Naive thymus-derived CD4-positive, alpha-beta T cell (primary cell): ENCODE measurements at regions of chr11 and their contacts with region 1.

Region 1: DNA sequence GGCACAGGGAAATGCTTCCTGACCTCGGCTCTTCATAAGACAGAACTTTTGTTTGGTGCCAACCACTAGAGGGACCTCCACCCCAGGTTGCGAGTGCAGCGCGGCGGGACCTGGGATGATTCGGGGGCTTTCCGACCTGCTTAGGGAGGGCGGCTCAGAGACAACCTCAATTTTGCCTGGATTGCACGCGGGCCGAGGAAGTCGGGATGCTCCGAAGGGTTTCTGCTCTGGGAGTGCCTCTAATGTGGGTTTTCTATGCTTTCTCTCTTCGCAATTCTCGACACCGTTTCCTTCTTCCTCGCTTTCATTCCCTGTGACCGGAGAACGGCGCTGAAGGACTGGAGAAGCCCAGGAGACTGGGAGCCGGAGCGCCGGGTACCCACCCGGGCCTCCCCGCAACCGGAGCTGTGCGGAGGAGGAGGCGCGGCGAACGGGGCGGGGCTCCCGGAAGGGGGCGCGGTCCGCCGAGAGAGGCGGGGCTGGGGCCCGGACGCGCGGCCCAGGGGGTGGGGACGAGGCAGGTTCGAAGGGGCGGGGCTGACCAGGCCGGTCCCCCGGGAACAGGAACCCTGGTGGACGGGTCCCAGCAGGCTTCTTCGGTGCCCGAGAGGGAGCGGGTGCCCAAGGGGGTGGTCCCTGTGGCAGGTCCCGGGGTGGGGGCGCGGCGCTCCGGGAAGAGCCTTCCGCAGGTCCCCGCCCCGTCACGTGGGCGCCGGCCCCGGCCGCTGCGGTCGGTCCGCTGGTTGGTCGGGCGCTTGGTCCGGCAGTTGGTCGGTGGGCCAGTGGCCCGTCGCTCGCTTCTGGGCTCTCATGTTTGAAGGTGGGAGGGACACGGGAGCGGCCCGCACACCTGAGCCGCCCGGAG is at the start of gene PPFIBP2:
- DNase-seq: peak; percentile 75 to 92 (median 85)
- ATAC-seq: peak; percentile 93
- H3K4me3 ChIP-seq: peak within 1 kb of the TSS; percentile 94
- H3K4me3 Mint-ChIP-seq: peak within 1 kb of the TSS; percentile 92 to 98 (median 95)
- H3K27ac ChIP-seq: peak within 1 kb of the TSS; percentile 91
- H3K27ac Mint-ChIP-seq: peak within 1 kb of the TSS in 8 of 9 donors; percentile 86 to 98 (median 96)
- H3K4me1 ChIP-seq: peaks cover 4 to 39% of the 10 kb centered on the region in 2 donors
- H3K4me1 Mint-ChIP-seq: peaks cover 11 to 65% (median 52%) of the 10 kb centered on the region in 7 donors
- H3K27me3 ChIP-seq: no peaks in the 10 kb centered on the region
- H3K27me3 Mint-ChIP-seq: peaks cover 0 to 23% (median 0%) of the 10 kb centered on the region in 5 donors
- total RNA-seq, gene PPFIBP2: 5.7 to 55.6 (median 45.9) TPM

Region 2: GRCh38 chr11:5690216-5690615 is 1823.2 kb before region 1 on chr11:
- CTCF ChIA-PET with region 1: no interaction called
- POLR2A ChIA-PET with region 1: no interaction called
- intact Hi-C with region 1: loop called in 1 of 2 experiments (anchors 5 kb)
- DNase-seq: no peak
- ATAC-seq: no peak
- H3K4me3 ChIP-seq: peak overlapping the region; percentile 81
- H3K4me3 Mint-ChIP-seq: peak overlapping the region; percentile 93 to 100 (median 98)
- H3K27ac ChIP-seq: peak overlapping the region; percentile 93
- H3K27ac Mint-ChIP-seq: peak overlapping the region; percentile 95 to 100 (median 97)
- H3K4me1 ChIP-seq: peaks cover 29 to 40% of the 10 kb centered on the region in 2 donors
- H3K4me1 Mint-ChIP-seq: peaks cover 38 to 68% (median 57%) of the 10 kb centered on the region in 7 donors
- H3K27me3 ChIP-seq: no peaks in the 10 kb centered on the region
- H3K27me3 Mint-ChIP-seq: no peaks in the 10 kb centered on the region

Region 3: DNA sequence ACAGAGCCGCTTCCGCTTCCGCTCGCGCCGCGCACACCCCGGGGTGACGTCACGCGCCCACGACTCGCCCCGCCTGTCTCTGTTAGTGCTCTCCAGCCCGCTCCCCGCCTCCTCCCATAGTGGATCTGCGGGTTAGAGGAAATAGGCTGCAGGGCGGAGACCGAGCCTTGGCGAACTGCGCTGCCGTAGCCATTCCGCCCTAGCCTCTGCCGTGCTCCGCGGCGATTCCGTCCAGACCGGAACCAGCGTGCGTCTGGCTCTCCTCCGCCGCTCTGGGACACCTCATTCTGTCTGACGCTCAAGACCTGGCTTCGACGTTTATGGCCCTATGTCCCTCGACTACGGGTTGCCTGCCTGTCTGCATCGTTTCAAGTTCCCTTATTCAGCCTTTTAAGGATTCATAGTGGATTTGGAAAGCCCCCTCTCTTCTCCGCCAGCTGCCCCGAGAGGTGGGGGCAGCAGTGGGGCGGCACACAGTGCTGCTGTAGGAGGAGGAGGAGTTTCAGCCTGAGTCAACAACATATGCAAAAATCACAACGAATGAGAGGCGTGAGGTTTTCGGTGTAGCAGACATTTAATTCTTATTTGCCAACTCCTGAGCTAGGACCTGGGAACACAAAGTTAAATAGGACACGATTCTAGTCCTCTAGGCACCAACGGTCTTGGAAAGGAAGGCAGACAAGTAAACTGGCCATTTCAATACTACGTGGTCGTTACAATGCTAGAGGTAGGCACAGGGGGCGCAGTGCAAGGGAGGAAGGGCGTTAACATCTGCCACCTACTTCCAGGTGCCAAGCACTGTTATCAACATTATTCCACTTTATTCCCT is 901.0 kb before region 1 on chr11 and contains the start of gene TAF10:
- CTCF ChIA-PET with region 1: no interaction called
- POLR2A ChIA-PET with region 1: no interaction called
- intact Hi-C with region 1: loop called in 1 of 2 experiments (anchors 10 kb)
- DNase-seq: peak; percentile 89 to 97 (median 95)
- ATAC-seq: peak; percentile 94
- H3K4me3 ChIP-seq: peak within 1 kb of the TSS; percentile 83
- H3K4me3 Mint-ChIP-seq: peak within 1 kb of the TSS in 6 of 10 donors; percentile 84 to 94 (median 92)
- H3K27ac ChIP-seq: peak within 1 kb of the TSS; percentile 91
- H3K27ac Mint-ChIP-seq: peak within 1 kb of the TSS in 5 of 9 donors; percentile 90 to 98 (median 96)
- H3K4me1 ChIP-seq: peaks cover 25% of the 10 kb centered on the region in 2 donors
- H3K4me1 Mint-ChIP-seq: peaks cover 9 to 46% (median 33%) of the 10 kb centered on the region in 7 donors
- H3K27me3 ChIP-seq: no peaks in the 10 kb centered on the region
- H3K27me3 Mint-ChIP-seq: no peaks in the 10 kb centered on the region
- total RNA-seq, gene TAF10: 116 to 135 (median 128) TPM

Region 4: GRCh38 chr11:7381937-7382336 is 131.5 kb before region 1 on chr11:
- CTCF ChIA-PET with region 1: no interaction called
- POLR2A ChIA-PET with region 1: no interaction called
- intact Hi-C with region 1: no loop called
- DNase-seq: no peak
- ATAC-seq: peak; percentile 31
- H3K4me3 ChIP-seq: no peak overlapping the region
- H3K4me3 Mint-ChIP-seq: no peak overlapping the region
- H3K27ac ChIP-seq: no peak overlapping the region
- H3K27ac Mint-ChIP-seq: no peak overlapping the region
- H3K4me1 ChIP-seq: no peaks in the 10 kb centered on the region
- H3K4me1 Mint-ChIP-seq: no peaks in the 10 kb centered on the region
- H3K27me3 ChIP-seq: no peaks in the 10 kb centered on the region
- H3K27me3 Mint-ChIP-seq: peaks cover 0 to 43% (median 29%) of the 10 kb centered on the region in 5 donors

Region 5: DNA sequence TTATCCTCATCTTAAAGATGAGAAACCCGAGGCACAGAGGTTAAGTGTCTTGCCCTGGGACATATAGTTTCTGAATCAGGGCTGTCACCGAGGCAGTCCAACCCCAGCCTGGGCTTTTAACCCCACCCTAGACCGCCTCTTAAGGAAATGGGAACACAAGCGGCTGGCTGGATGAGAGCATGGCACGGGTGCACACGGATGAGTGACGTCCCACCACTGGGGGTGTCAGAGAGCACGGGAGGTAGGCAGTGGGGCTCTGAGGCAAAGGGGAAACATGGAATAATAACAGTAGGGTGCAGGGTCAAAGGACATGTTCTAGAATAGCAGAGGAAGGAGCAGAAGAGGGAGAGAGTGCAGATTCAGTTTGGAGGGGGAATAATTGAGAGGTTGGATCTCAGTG is 22.6 kb after region 1 on chr11:
- CTCF ChIA-PET with region 1: interaction called, 50 read pairs
- POLR2A ChIA-PET with region 1: interaction called, 24 read pairs
- intact Hi-C with region 1: loop called in 1 of 2 experiments (anchors 1 kb)
- DNase-seq: no peak
- ATAC-seq: peak; percentile 48
- H3K4me3 ChIP-seq: no peak overlapping the region
- H3K4me3 Mint-ChIP-seq: peak overlapping the region in 4 of 10 donors; percentile 53 to 67 (median 56)
- H3K27ac ChIP-seq: no peak overlapping the region
- H3K27ac Mint-ChIP-seq: peak overlapping the region in 3 of 9 donors; percentile 26 to 69 (median 48)
- H3K4me1 ChIP-seq: peaks cover 5 to 43% of the 10 kb centered on the region in 2 donors
- H3K4me1 Mint-ChIP-seq: peaks cover 37 to 88% (median 81%) of the 10 kb centered on the region in 7 donors
- H3K27me3 ChIP-seq: no peaks in the 10 kb centered on the region
- H3K27me3 Mint-ChIP-seq: peaks cover 0 to 23% (median 0%) of the 10 kb centered on the region in 5 donors

Region 6: DNA sequence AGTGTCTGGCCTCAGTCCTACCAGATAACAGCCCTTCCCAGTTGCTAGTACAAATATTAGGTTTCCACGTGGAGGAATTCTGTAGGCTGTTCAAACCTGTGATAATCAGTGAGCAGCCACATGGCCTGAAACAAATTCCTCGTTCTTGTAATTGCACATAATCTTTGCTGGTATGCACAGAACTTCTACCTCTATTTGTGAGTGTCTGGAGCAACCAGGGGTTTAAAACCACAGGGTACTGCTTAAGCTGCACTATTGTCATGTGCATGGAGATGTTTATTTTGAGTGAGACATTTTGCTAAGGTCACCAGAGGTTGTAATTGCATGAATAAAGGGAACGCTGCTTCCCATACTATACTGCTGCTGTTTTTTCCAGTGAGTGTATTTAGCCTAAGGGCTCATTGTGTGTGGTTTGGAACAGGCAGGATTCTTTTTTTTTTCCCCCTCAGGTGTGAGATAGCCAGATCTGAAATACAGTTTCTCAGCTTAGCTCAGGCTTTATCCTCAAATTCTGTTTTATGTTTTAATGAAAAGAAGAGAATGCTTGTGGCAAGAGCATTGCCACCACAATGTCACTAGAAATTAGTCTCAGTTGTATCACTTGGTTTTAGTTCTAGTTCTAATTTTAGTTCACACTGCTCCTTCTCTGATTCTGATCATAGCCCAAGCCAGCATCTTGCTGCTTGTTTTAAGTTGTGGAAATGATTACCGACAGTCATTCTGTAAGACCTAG is 99.4 kb after region 1 on chr11:
- CTCF ChIA-PET with region 1: interaction called, 3 read pairs
- POLR2A ChIA-PET with region 1: no interaction called
- intact Hi-C with region 1: loop called in 1 of 2 experiments (anchors 5 kb)
- DNase-seq: no peak
- ATAC-seq: no peak
- H3K4me3 ChIP-seq: no peak overlapping the region
- H3K4me3 Mint-ChIP-seq: no peak overlapping the region
- H3K27ac ChIP-seq: no peak overlapping the region
- H3K27ac Mint-ChIP-seq: no peak overlapping the region
- H3K4me1 ChIP-seq: no peaks in the 10 kb centered on the region
- H3K4me1 Mint-ChIP-seq: peaks cover 0 to under 1% (median 0%) of the 10 kb centered on the region in 7 donors
- H3K27me3 ChIP-seq: no peaks in the 10 kb centered on the region
- H3K27me3 Mint-ChIP-seq: peaks cover 0 to 9% (median 0%) of the 10 kb centered on the region in 5 donors

Region 7: DNA sequence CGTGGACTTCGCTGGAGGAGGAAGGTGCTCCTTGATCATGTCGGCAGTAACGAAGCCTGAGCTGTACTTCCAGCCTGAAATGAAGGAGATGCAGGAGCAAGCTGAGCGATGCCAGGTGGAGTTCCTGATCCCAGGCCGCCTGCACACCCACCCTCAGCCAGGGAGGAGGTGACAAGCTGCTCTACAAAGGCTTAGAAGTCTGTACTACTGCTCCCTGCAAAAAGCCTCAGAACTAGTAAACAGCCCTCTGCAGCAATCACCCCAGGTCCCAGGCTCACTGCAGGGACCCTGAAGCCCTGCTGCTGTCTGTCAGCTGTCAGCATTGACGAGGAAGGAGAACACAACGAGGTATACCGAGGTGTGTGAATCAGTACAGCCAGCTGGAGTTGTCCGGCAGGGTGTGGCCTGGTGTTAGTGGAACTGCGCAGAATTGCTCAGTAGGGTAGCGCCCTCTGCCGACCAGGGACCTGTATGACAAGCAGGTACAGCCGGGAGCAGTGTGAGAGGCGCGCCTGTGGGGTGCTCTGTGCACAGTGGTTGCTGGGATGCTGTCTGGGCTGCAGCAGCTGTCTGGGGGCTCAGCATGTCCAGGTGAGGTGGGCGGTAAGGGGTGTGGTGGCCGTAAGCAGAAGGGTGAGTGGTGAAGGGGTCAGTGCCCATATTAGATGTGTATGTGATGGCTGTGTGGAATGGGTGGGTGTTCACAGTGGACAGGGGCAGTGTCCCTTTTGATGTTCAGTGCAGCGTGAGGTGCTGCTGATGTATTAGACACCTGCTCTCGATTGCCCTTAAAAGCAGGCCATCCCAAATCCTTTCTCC is 152.2 kb after region 1 on chr11:
- CTCF ChIA-PET with region 1: interaction called, 3 read pairs
- POLR2A ChIA-PET with region 1: no interaction called
- intact Hi-C with region 1: loop called (anchors 1 kb)
- DNase-seq: peak; percentile 24 to 73 (median 62)
- ATAC-seq: peak; percentile 98
- H3K4me3 ChIP-seq: no peak overlapping the region
- H3K4me3 Mint-ChIP-seq: no peak overlapping the region
- H3K27ac ChIP-seq: no peak overlapping the region
- H3K27ac Mint-ChIP-seq: peak overlapping the region in 1 of 9 donors; percentile 17
- H3K4me1 ChIP-seq: no peaks in the 10 kb centered on the region
- H3K4me1 Mint-ChIP-seq: peaks cover 0 to 6% (median 2%) of the 10 kb centered on the region in 7 donors
- H3K27me3 ChIP-seq: no peaks in the 10 kb centered on the region
- H3K27me3 Mint-ChIP-seq: peaks cover 0 to 3% (median 0%) of the 10 kb centered on the region in 5 donors

Region 8: DNA sequence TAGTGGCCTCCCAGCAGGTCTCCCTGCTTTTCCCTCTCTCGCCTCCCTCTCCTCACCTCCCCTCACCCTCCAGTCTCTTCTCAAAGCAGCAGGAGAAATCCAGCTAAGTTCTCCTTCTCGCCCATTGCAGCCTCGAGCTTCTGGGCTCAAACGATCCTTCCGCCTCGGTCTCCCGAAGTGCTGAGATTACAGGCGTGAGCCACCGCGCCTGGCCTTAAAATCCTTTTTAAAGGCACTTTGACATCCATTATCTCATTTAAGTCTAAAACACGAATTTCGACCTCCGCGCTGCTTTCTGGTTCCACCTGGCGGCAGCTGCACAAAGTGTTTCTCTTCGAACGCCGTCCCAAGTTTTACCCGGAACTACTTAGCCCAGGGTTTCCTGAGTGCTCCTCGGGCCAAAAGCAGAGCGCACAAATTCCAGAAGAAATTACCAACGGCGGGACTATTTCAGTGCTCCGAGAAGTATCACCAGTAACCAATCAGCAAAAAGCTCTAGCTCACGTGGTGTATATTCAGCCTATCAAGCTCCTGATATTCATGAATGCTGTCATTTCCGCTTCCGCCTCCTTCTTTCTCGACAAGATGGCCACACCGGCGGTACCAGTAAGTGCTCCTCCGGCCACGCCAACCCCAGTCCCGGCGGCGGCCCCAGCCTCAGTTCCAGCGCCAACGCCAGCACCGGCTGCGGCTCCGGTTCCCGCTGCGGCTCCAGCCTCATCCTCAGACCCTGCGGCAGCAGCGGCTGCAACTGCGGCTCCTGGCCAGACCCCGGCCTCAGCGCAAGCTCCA is 473.5 kb after region 1 on chr11 and contains the start of gene EIF3F:
- CTCF ChIA-PET with region 1: no interaction called
- POLR2A ChIA-PET with region 1: no interaction called
- intact Hi-C with region 1: loop called (anchors 1 to 2 kb)
- DNase-seq: peak; percentile 64 to 98 (median 95)
- ATAC-seq: peak; percentile 98
- H3K4me3 ChIP-seq: peak within 1 kb of the TSS; percentile 70
- H3K4me3 Mint-ChIP-seq: peak within 1 kb of the TSS; percentile 85 to 99 (median 92)
- H3K27ac ChIP-seq: peak within 1 kb of the TSS; percentile 78
- H3K27ac Mint-ChIP-seq: peak within 1 kb of the TSS; percentile 88 to 100 (median 97)
- H3K4me1 ChIP-seq: peaks cover 20 to 31% of the 10 kb centered on the region in 2 donors
- H3K4me1 Mint-ChIP-seq: peaks cover 29 to 64% (median 49%) of the 10 kb centered on the region in 7 donors
- H3K27me3 ChIP-seq: no peaks in the 10 kb centered on the region
- H3K27me3 Mint-ChIP-seq: no peaks in the 10 kb centered on the region
- total RNA-seq, gene EIF3F: 222 to 405 (median 353) TPM